ENCODE measurements at regions of chr6 and their contacts with region 1.

Region 1: GRCh38 chr6:138970856-138971425 is 17.1 kb downstream of the REPS1 start:
- DNase-seq: peak; percentile 57
- H3K4me3 Mint-ChIP-seq: no peak overlapping the region
- H3K27ac Mint-ChIP-seq: no peak overlapping the region
- H3K4me1 Mint-ChIP-seq: peaks cover 69% of the 10 kb centered on the region
- H3K27me3 Mint-ChIP-seq: no peaks in the 10 kb centered on the region

Region 2: GRCh38 chr6:138981416-138981815 is 10.5 kb after region 1 on chr6:
- CTCF ChIA-PET with region 1: interaction called, 8 read pairs
- intact Hi-C with region 1: loop called (anchors 1 kb)
- DNase-seq: no peak
- H3K4me3 Mint-ChIP-seq: no peak overlapping the region
- H3K27ac Mint-ChIP-seq: no peak overlapping the region
- H3K4me1 Mint-ChIP-seq: peaks cover 38% of the 10 kb centered on the region
- H3K27me3 Mint-ChIP-seq: no peaks in the 10 kb centered on the region

Measured in activated naive CD4-positive, alpha-beta T cell treated with anti-CD3 and anti-CD28 coated beads for 36 hours (primary cell).